ENCODE measurements at regions of chr2 and their contacts with region 1.

Region 1: DNA sequence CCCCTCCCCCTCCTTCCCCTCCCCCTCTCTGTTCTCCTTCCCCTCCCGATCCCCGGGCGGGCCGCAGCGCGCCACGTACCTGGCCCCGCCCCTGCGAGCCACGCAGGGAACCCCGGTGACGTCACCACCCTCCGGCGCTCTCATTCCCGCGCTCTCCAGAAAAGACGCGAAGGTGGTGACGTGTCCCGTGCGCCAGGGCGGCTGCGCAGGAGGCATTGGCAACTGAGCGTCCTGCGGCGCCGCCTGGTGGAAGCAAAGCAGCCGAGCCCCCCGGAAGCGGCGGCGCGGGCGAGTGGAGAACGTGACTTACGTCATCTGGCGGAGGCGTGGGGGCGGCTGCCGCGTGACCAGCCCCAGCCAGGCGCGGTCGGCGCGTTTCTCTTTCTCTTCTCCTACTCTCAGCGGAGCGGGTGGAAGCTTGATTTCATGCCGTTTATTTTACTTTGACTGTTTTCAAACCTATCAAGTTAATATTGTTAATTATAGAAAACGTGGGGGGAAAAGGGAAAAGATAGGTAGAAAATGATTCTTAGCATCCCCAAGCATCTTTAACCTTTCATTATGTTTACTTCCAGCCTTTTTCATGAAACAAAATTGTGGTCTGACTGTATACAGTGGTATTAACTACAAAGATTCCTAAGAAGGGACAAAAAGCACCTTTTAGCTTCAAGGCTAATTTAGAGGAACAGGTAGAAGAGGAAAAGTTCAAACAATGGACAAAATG is 48.1 kb downstream of the C2orf42 start:
- DNase-seq: peak; percentile 99
- H3K4me3 ChIP-seq: peak overlapping the region; percentile 42 to 56 (median 54)
- H3K27ac ChIP-seq: peak overlapping the region; percentile 90
- H3K4me1 ChIP-seq: peaks cover 36% of the 10 kb centered on the region
- H3K27me3 ChIP-seq: no peaks in the 10 kb centered on the region
- CTCF ChIP-seq: peak; percentile 87 to 98

Region 2: GRCh38 chr2:69829256-69830046 is 313.3 kb before region 1 on chr2 and contains the start of gene GMCL1:
- CTCF ChIA-PET with region 1: no interaction called
- dilution Hi-C with region 1: no loop called
- in situ Hi-C with region 1: no loop called
- intact Hi-C with region 1: loop called (anchors 10 kb)
- DNase-seq: peak; percentile 95
- H3K4me3 ChIP-seq: peak within 1 kb of the TSS; percentile 76 to 96 (median 87)
- H3K27ac ChIP-seq: peak within 1 kb of the TSS; percentile 84
- H3K4me1 ChIP-seq: peaks cover 14% of the 10 kb centered on the region
- H3K27me3 ChIP-seq: no peaks in the 10 kb centered on the region
- CTCF ChIP-seq: no peak
- total RNA-seq, gene GMCL1: 10.7 to 11.5 TPM

Region 3: DNA sequence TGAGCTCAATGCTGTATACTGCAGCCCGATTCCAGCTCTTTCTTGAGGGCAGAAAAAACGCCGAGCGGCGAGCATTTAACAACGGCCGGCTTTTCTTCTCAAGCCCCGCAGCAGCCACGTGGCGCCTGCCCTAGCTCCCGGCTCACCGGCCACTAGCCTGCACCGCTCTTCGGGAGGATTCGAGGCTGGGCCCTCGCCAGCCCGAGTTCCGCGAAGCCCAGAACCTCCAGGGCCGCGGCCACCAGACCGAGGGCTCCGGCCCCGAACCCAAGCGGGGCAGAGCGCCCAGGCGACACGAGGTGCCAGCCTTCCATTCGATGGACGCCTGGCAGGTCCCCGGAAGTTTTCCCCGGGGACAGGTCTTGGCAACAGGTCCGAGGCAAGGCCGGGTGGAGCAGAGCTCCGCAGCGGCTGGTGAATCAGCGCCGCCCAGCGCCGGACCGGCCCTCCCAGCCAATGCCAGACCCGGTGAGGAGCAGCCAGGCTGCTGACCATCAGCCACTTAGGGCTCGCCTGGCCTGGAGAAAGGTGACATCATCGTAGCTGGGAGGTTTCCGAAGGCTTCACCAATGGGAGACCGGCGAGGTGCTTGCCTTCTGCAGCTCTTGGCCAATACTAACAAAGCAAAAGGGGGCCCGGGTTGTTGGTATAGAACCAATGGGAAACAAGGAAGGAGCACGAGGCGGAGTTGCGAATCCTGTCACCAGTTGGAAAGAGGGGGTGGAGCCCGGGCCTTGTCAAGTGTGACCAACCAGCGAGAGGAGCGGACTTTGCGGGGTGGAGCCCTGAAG is 228.4 kb before region 1 on chr2:
- CTCF ChIA-PET with region 1: interaction called, 19 read pairs
- dilution Hi-C with region 1: loop called (anchors 5 kb)
- in situ Hi-C with region 1: loop called (anchors 5 to 10 kb)
- intact Hi-C with region 1: loop called (anchors 1 kb)
- DNase-seq: peak; percentile 100
- H3K4me3 ChIP-seq: peak overlapping the region; percentile 63 to 91 (median 79)
- H3K27ac ChIP-seq: peak overlapping the region; percentile 90
- H3K4me1 ChIP-seq: peaks cover 31% of the 10 kb centered on the region
- H3K27me3 ChIP-seq: no peaks in the 10 kb centered on the region
- CTCF ChIP-seq: peak in 1 of 2 donors; percentile 10

Region 4: DNA sequence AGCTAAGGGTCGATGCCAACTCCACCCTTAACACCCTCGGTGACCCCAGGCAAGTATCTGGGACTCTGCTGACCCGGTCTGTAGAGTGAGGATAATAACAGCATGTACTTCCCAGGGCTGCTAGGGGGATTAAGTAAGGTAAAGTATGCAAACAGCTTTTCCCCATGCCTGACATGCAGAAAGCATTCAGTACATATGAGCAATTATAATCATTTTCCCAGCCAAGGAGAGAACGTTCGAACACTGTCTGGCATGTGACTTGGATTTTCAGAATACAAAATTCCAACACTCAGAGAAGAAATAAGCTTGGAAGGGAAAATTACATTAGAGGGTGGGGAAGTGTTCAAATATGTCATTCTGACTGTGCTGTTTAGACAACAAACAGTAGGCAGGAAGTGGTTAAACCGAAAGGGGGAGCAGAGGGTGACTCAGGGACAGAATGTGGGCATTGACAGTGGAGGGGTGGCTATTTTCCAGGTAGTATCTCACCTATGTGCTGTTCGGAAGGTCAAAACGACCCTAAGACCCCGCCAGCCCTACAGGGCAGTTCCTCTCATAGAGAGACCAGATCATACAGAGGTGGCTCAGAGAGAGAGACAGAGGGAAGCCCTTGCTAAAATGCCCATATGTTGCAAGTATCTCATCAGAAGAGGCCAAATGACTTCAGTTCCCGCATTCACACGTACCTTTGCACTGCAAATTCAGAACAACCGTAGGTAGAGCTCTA is 196.2 kb before region 1 on chr2:
- CTCF ChIA-PET with region 1: no interaction called
- dilution Hi-C with region 1: loop called (anchors 10 kb)
- in situ Hi-C with region 1: no loop called
- intact Hi-C with region 1: no loop called
- DNase-seq: peak; percentile 89
- H3K4me3 ChIP-seq: no peak overlapping the region
- H3K27ac ChIP-seq: peak overlapping the region; percentile 97
- H3K4me1 ChIP-seq: peaks cover 35% of the 10 kb centered on the region
- H3K27me3 ChIP-seq: no peaks in the 10 kb centered on the region
- CTCF ChIP-seq: no peak

Region 5: DNA sequence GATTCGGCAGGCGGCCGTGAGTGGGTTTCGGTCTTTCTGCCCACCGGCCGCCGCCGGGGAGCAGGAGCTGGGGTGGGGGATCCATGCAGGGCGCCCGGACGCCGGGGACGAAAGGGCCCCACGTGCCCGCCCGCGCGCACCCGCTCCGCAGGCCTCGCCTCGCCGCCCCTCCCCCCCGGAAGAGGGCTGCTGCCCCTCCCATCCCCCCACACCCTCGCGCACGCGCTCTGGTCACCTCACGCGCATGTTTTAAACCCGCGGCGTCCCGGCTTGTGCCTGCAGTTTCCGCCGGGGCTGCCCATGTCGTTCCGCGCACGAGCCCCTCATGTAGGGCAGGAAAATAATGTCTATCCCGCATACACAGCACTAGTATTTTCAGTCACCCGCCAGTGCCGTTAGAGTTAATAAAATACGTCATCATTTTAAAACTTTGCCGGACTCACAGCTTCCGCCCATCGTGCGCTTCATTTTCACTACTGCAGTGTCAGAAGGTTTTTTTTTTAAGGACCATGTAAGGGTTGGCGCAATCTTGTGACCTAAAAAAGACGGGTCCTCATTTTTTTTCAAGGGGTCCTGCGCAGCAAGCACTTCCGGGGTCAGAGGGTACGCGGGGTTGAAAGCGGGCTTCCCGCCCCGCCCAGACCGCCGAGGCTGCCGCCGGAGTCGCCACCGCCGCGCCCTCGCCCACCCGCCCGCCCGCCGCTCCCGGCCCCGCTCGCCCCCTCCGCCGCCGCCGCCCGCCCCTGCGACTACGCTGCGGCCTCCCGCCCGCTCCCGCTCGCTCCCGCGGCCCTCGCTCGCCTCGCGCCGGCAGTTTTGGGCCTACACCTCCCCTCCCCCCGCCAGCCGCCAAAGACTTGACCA is 55.7 kb before region 1 on chr2 and contains the start of gene PCBP1:
- CTCF ChIA-PET with region 1: no interaction called
- dilution Hi-C with region 1: no loop called
- in situ Hi-C with region 1: loop called in 1 of 2 experiments (anchors 5 kb)
- intact Hi-C with region 1: loop called (anchors 1 kb)
- DNase-seq: peak; percentile 86
- H3K4me3 ChIP-seq: peak within 1 kb of the TSS; percentile 85 to 96 (median 86)
- H3K27ac ChIP-seq: peak within 1 kb of the TSS; percentile 99
- H3K4me1 ChIP-seq: peaks cover 36% of the 10 kb centered on the region
- H3K27me3 ChIP-seq: no peaks in the 10 kb centered on the region
- CTCF ChIP-seq: no peak
- total RNA-seq, gene PCBP1: 47.2 to 258 TPM

Region 6: DNA sequence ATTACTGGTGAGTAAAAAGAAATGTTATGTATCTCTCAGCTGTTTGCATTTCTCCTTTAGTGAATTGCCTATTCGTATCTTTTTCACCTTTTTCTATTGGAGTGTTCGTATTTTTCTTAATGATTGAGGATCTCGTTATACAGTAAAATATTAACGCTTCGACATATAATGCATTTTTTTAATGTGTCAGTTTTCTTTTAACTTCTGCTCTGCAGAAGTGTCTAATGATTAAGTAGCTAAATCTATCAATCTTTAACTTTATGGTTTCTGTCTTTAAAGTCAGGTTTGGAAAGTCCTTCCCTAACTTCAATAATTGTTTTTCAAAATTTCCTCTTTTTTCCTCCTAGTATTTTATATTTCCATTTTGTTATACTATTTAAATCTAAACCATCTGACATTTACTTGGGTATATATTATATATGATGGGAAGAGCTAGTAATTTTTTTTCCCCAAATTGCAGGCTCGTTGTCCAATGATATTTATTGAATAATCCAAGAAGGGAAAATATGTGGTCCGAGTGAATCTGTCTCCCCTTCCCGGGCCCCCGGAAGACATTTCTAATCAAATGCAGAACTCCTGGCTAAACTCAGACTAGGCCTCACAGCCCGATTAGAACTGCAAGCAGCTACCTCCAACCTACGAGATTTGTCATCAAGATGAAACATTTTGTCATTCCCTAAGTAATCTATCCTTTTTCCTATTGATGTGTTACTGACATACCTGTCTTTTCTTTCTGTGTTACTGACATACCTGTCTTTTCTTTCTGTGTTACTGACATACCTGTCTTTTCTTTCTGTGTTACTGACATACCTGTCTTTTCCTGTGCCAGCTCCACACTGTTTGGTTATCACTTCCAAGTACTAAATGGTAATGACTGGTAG is 38.3 kb before region 1 on chr2:
- CTCF ChIA-PET with region 1: no interaction called
- dilution Hi-C with region 1: no loop called
- in situ Hi-C with region 1: no loop called
- intact Hi-C with region 1: no loop called
- DNase-seq: no peak
- H3K4me3 ChIP-seq: no peak overlapping the region
- H3K27ac ChIP-seq: no peak overlapping the region
- H3K4me1 ChIP-seq: peaks cover 13% of the 10 kb centered on the region
- H3K27me3 ChIP-seq: no peaks in the 10 kb centered on the region
- CTCF ChIP-seq: no peak

Region 7: GRCh38 chr2:70181363-70181956 is 38.7 kb after region 1 on chr2:
- CTCF ChIA-PET with region 1: no interaction called
- dilution Hi-C with region 1: loop called (anchors 5 kb)
- in situ Hi-C with region 1: no loop called
- intact Hi-C with region 1: no loop called
- DNase-seq: no peak
- H3K4me3 ChIP-seq: no peak overlapping the region
- H3K27ac ChIP-seq: no peak overlapping the region
- H3K4me1 ChIP-seq: no peaks in the 10 kb centered on the region
- H3K27me3 ChIP-seq: no peaks in the 10 kb centered on the region
- CTCF ChIP-seq: no peak

Region 8: DNA sequence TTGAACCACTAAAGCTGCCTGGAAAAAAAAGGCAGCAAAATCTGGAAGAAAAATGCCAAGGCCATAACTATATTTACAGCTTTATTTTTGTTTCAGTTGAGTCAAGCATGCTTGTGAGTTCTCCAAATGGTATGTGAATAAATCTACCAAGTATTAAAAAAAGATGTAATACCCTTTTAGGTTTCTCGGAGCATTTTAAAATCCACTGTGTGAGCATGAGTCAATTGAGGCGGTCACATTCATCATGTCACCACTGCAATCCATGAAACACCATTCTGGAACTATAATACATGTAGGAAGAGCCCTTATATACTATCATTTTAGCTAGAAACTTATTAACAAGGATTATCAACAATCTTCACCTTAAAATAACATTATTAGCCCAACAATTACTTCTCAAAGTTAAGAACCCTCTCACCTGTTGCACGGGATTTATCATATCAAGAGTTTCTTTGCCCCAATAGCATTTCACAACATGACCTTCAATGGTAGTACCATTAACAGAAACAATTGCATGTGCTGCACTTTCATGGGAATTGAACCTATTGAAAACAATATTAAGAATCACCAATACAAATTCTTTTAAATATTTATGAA is 72.3 kb after region 1 on chr2:
- CTCF ChIA-PET with region 1: no interaction called
- dilution Hi-C with region 1: loop called (anchors 10 kb)
- in situ Hi-C with region 1: no loop called
- intact Hi-C with region 1: no loop called
- DNase-seq: no peak
- H3K4me3 ChIP-seq: no peak overlapping the region
- H3K27ac ChIP-seq: no peak overlapping the region
- H3K4me1 ChIP-seq: no peaks in the 10 kb centered on the region
- H3K27me3 ChIP-seq: no peaks in the 10 kb centered on the region
- CTCF ChIP-seq: no peak

Measured in mammary epithelial cell (primary cell).